ENCODE measurements at regions of chr3 and their contacts with region 1.

Region 1: DNA sequence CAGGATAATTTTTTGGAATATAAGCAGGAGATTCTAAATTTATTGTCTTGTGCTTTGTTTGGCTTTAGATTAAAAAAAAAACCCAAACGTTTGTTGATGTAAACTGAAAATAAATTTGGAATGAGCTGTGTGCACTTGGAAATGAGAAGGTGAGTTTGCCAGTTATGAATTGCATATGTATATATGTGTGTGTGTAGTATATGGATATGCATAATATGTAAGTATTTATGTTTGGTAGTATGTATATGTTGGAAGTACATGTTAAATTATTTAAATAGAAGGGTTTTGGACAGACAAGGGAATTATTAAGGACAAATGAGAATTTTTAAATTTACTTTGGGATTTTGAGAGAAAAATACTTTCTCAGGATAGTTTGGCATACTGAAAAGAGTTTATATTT is 265.8 kb upstream of the CNTN3 start:
- DNase-seq: no peak
- H3K4me3 ChIP-seq: no peak overlapping the region
- H3K27ac ChIP-seq: no peak overlapping the region
- H3K4me1 ChIP-seq: no peaks in the 10 kb centered on the region
- H3K27me3 ChIP-seq: no peaks in the 10 kb centered on the region
- CTCF ChIP-seq: no peak
- POLR2A ChIP-seq: no peak

Region 2: DNA sequence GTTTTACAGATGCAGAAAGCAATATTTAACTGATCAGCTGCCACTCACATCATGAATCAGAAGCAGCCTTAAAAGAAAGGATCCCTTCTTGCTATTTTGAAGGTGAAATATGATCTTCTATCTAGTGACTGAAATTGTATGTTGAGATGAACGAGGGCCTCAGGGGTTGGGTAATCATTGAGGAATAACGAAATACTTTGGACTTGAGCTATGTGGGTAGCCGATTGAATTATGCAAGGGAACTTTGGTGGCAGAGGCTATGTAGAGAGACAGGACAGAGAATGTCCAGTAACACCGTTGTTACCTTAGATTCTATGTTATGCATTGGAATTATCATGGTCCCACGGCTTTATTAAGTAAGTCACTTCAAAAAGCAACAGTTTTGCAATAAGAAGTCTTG is 21.3 kb before region 1 on chr3:
- intact Hi-C with region 1: loop called (anchors 2 kb)
- DNase-seq: no peak
- H3K4me3 ChIP-seq: no peak overlapping the region
- H3K27ac ChIP-seq: no peak overlapping the region
- H3K4me1 ChIP-seq: no peaks in the 10 kb centered on the region
- H3K27me3 ChIP-seq: no peaks in the 10 kb centered on the region
- CTCF ChIP-seq: no peak
- POLR2A ChIP-seq: no peak

Region 3: DNA sequence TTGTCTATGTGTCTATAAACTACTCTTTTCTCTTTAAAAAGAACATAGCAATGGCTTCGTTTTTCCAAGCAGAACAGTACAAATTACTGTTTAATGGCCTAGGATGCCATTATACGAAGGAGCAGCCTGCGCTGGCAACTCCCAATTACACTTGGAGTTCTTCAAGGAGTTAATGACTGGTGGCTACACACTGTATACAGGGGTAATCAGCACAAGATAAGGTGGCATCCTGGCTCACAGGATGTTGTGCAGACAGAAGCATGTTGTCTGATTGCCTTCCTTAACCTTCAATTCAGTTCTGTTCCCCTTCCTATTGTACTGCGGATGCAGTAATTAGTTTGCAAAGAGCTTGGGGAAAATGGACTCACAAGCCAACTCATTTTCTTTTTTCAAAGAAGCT is 1909.0 kb after region 1 on chr3:
- intact Hi-C with region 1: no loop called
- DNase-seq: no peak
- H3K4me3 ChIP-seq: no peak overlapping the region
- H3K27ac ChIP-seq: no peak overlapping the region
- H3K4me1 ChIP-seq: no peaks in the 10 kb centered on the region
- H3K27me3 ChIP-seq: no peaks in the 10 kb centered on the region
- CTCF ChIP-seq: no peak
- POLR2A ChIP-seq: no peak